Posterior cingulate gyrus (tissue), 11 donors: ENCODE measurements at regions of chr1 and their contacts with region 1.

Region 1: GRCh38 chr1:3423245-3423829 is 31.1 kb upstream of the ARHGEF16 start:
- DNase-seq: peak; percentile 45 to 95 (median 60)

Region 2: GRCh38 chr1:2412519-2413233 is 1010.7 kb before region 1 on chr1 and contains the start of gene PEX10:
- intact Hi-C with region 1: loop called (anchors 10 kb)
- DNase-seq: peak; percentile 93 to 100 (median 96)

Region 3: DNA sequence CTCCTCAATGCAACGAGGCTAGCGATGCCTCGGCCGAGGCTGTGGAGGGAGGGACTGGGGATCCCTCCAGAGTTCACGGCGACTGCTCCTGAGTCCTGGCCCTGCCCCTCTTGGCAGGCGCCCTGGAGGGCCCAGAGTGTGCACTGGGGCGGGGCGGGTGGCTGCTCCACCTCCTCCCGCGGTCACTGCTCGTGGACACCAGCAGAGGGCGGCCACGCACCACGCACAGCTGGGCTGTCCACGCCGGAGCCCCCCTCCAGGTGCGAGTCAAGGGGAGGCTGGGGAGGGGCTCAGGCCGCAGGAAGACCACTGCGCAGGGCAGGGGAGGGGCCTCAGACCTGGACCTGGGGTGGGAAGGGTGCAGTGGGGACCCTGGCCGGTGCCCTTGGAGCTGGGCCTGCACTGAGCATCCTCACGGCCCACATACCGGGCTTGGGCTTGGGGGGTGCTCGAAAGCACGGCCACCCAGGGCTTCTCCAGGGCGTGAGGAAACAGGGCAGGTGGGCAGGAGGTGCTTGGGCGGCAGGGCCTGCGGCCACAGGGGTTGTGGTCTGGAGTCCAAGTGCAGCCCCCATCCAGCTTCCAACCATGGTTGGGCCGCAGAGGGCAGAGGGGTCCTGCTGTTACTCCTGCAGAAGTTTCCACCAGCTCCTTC is 601.2 kb before region 1 on chr1:
- intact Hi-C with region 1: loop called (anchors 1 kb)
- DNase-seq: peak; percentile 27 to 92 (median 56)

Region 4: DNA sequence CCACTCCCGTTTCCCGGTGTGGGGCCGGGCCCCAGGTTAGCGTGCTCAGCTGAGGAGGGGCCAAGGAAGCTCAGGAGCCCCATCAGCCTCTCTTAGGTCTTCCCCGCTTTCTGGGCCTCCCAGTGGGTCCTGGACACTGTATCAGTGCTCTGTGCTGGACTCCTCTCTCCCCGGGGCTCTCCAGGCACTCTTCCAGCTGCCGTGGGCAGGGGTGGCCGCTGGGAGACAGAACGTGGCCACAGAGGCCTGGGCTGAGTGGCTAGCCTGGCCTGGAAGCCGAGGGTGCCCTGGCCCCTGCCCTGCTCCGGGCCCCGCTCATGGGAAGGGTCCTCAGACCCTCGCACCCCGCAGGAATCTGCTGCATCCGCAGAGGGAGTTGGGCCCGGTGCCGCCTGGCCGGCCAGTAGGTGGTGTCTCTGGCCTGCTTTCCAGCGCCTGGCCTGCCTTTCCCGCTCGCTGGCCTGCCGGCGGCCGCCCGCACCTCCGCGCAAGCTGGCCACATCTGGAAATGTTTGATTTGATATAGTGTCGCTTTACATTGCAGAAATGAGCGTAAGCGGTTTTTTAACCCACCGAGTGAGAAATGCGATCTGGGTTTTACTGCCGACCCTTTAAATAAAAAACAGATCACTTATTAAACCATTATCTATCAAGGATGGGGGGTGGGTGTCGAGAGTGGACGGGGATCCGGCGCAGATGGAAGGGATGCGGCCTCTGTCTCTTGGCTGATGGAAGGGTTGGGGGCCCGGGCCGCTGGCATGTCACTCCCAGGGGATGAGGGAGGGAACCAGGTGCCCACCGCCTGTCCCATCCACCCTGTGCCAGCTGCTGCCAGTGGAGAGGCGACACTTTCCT is 547.4 kb before region 1 on chr1:
- intact Hi-C with region 1: loop called (anchors 5 kb)
- DNase-seq: peak in 7 of 10 donors; percentile 21 to 91 (median 36)

Region 5: GRCh38 chr1:3012456-3013291 is 410.7 kb before region 1 on chr1:
- intact Hi-C with region 1: loop called (anchors 5 kb)
- DNase-seq: peak; percentile 59 to 96 (median 84)